ENCODE measurements at regions of chr22 and their contacts with region 1.

Region 1: DNA sequence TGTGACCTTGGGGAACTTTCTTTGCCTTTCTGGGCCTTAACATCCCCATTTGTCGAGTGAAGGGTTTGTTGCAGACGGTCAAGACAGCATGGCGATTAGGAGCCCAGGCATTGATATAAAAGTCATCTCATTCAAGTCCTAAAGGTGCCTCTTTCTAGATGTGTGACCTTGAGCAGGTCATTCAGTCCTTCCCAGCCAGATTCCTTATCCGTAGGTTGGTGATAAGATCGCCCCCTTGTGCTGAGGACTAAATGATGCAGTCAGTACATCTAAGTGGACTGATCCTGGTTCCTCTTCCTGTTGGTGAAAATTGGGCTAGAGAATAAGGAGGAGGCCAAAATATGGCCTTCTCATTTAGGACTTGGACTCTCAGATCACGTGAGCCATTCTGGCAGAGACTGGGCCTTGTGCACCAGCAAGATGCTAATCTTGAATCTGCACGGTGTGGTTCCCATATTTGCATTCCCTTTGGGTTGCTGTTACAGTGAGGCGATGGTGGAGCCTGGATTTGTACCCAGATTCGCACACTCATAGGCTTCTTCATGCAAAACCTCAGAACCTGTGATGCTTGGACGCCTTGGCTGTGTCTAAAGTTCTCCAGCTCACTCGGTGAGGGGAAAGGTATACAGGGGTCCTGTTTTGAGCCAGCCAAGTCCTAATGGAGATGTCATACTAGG is 156.8 kb downstream of the MYO18B start:
- DNase-seq: no peak
- ATAC-seq: no peak
- H3K4me3 ChIP-seq: no peak overlapping the region
- H3K4me3 Mint-ChIP-seq: no peak overlapping the region
- H3K27ac ChIP-seq: no peak overlapping the region
- H3K27ac Mint-ChIP-seq: no peak overlapping the region
- H3K4me1 ChIP-seq: no peaks in the 10 kb centered on the region
- H3K4me1 Mint-ChIP-seq: no peaks in the 10 kb centered on the region
- H3K27me3 ChIP-seq: peaks cover 0 to 9% (median 1%) of the 10 kb centered on the region in 4 experiments
- H3K27me3 Mint-ChIP-seq: peaks cover 20% of the 10 kb centered on the region
- CTCF ChIP-seq: no peak

Region 2: GRCh38 chr22:25777870-25778269 is 121.0 kb before region 1 on chr22:
- CTCF ChIA-PET with region 1: no interaction called
- POLR2A ChIA-PET with region 1: no interaction called
- intact Hi-C with region 1: no loop called
- DNase-seq: no peak
- ATAC-seq: no peak
- H3K4me3 ChIP-seq: no peak overlapping the region
- H3K4me3 Mint-ChIP-seq: no peak overlapping the region
- H3K27ac ChIP-seq: no peak overlapping the region
- H3K27ac Mint-ChIP-seq: no peak overlapping the region
- H3K4me1 ChIP-seq: peaks cover under 1 to 3% of the 10 kb centered on the region in 2 donors
- H3K4me1 Mint-ChIP-seq: peaks cover 2% of the 10 kb centered on the region
- H3K27me3 ChIP-seq: no peaks in the 10 kb centered on the region
- H3K27me3 Mint-ChIP-seq: peaks cover 13% of the 10 kb centered on the region
- CTCF ChIP-seq: no peak

Region 3: DNA sequence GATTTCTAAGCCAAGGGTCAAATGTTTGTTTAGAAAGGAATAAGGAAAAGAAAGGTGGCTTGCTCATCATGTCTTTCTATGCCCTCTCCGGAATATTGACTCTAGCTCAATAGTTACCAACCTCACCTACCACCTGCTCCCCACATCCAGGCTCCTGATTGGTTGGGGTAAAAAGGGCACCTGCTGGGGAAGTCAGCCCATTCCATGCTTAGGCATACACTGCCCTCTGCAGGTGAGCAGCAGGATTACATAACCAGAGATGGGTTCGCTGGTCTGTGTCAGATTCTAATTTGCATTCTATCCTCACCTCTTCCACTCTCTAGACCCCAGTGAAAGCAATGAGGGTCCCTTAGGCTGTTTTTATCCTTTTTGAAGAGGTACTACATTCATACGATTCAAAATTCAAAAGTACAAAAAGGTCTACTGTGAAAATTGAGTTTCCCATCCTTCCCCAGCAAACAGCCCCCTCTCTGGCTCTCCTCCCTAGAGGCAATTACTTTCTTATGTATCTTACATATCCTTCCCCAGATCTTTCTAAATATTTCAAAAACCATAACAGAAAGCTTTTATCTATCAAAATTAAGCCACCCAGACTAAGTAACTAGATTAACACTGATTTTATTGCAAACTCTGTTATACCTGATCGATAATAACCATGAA is 432.3 kb after region 1 on chr22:
- CTCF ChIA-PET with region 1: interaction called, 3 read pairs
- POLR2A ChIA-PET with region 1: no interaction called
- intact Hi-C with region 1: loop called (anchors 5 kb)
- DNase-seq: peak; percentile 70
- ATAC-seq: peak; percentile 80
- H3K4me3 ChIP-seq: no peak overlapping the region
- H3K4me3 Mint-ChIP-seq: no peak overlapping the region
- H3K27ac ChIP-seq: no peak overlapping the region
- H3K27ac Mint-ChIP-seq: no peak overlapping the region
- H3K4me1 ChIP-seq: no peaks in the 10 kb centered on the region
- H3K4me1 Mint-ChIP-seq: no peaks in the 10 kb centered on the region
- H3K27me3 ChIP-seq: peaks cover 0 to 12% (median 0%) of the 10 kb centered on the region in 4 experiments
- H3K27me3 Mint-ChIP-seq: peaks cover 33% of the 10 kb centered on the region
- CTCF ChIP-seq: peak; percentile 88

Measured in B cell (primary cell).